ENCODE measurements at regions of chr7 and their contacts with region 1.

Region 1: DNA sequence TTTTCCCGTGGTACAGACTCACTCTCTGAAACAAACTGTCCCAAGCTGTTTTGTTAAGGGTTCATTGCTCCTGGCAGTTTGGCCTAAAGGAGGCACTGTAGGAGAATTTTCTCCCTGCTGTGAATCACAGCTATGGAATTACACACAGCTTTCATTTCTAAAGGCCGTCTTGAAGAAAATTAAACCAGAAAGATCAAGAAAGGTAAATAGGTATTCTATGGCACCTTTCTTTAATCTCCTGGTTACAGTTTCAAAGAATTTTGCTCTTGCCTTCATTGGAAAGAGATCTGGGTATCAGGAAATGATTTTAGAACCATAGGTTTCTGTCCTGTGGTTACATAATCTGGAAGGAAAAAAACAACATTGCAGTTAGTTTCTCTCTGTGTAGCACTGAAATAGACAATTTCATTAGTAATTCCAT is 51.2 kb downstream of the PDK4 start:
- DNase-seq: peak; percentile 34
- H3K4me3 ChIP-seq: peak overlapping the region; percentile 26
- H3K27ac ChIP-seq: no peak overlapping the region
- H3K27me3 ChIP-seq: peaks cover 2% of the 10 kb centered on the region
- CTCF ChIP-seq: peak; percentile 83

Region 2: GRCh38 chr7:95511716-95512260 is 33.3 kb before region 1 on chr7:
- CTCF ChIA-PET with region 1: interaction called, 51 read pairs
- POLR2A ChIA-PET with region 1: no interaction called
- DNase-seq: peak; percentile 27
- H3K4me3 ChIP-seq: no peak overlapping the region
- H3K27ac ChIP-seq: no peak overlapping the region
- H3K27me3 ChIP-seq: no peaks in the 10 kb centered on the region
- CTCF ChIP-seq: peak; percentile 92

Region 3: GRCh38 chr7:95534796-95535195 is 10.3 kb before region 1 on chr7:
- CTCF ChIA-PET with region 1: interaction called, 77 read pairs
- POLR2A ChIA-PET with region 1: no interaction called
- DNase-seq: no peak
- H3K4me3 ChIP-seq: no peak overlapping the region
- H3K27ac ChIP-seq: no peak overlapping the region
- H3K27me3 ChIP-seq: peaks cover 2% of the 10 kb centered on the region
- CTCF ChIP-seq: no peak

Region 4: DNA sequence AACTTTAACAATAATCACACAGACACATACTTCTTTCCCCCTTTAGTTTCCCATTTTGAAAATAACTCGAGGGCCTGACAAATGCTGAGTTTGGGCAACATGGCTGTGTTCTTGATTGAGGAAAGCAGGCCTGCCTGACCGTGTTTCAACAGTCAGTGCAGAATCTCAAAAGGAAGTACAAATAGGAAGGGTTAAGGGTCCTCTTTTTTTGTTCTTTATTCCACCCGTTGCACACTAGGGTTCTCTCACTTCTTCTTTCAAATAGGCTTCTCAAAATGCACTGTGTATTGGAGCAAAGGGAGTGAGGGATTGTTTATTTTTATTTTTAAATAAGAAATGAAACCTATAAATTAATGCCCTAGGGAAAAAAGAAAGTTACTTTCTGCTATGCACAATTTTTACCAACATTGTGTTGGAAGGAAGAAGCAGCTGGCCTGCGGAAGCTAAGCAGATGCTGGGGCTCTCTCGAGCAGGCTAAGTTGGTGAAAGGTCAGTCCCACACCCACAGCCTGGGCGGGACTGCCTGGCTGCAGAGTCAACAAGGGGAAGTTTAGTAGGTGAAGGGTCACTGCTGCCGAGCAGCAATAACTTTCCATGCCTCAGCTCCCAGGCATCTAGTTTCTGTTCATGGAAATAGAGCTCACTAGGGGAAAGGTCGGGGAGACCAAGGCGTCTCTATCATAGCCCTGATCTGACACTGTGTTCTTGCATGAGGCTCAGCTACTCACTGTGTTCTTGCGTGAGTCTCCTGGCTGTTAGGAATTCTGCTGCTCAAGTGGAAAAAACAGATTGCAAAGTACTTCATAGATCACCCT is 63.5 kb after region 1 on chr7:
- CTCF ChIA-PET with region 1: interaction called, 10 read pairs
- POLR2A ChIA-PET with region 1: interaction called, 9 read pairs
- DNase-seq: peak; percentile 82
- H3K4me3 ChIP-seq: peak overlapping the region; percentile 15; the same call in 1 of the 2 replicates
- H3K27ac ChIP-seq: peak overlapping the region; percentile 69
- H3K27me3 ChIP-seq: no peaks in the 10 kb centered on the region
- CTCF ChIP-seq: no peak

Region 5: GRCh38 chr7:95690367-95690947 is 145.4 kb after region 1 on chr7:
- CTCF ChIA-PET with region 1: interaction called, 367 read pairs
- POLR2A ChIA-PET with region 1: no interaction called
- DNase-seq: peak; percentile 10
- H3K4me3 ChIP-seq: no peak overlapping the region
- H3K27ac ChIP-seq: no peak overlapping the region
- H3K27me3 ChIP-seq: no peaks in the 10 kb centered on the region
- CTCF ChIP-seq: peak; percentile 58

Measured in AG04450 (cell line).